HepG2 (cell line): ENCODE measurements at regions of chr20 and their contacts with region 1.

Region 1: DNA sequence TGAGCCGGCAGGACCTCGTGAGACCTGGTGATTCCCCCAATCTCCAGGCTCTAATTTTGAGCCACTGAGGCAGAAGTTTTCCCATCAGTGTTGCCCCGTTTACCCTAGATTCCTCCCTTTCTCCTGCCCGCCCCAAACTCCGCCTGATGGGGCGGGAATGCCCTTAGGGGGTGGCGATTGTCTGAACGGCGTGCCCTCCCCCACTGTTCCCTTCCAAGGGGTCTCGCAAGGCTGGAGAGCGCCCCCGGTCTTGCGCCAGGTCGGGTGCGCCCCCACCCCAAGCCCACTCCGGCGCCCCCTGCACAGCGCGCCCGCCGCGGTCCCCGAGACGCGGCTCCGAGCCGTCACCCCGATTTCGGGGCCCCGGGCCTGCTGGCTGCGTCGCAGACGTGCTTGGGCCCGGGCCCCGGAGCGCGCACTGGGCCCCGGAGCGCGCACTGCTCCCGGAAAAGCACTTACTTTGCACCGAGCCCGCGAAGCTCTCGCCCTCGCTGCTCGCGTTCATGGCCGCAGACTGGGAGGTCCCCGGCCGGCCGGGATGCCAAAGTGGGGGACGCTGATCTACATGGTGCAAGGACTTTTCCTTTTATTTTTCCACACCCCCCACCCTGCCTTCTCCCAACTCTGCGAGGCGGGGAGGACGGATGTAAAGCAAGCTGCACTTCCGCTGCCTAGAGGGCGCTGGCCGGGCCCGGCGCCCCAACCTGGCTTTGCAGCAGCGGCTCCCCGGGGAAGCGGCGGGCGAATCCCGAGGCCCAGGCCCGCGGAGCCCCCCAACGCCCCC is at the start of gene ZFP64:
- DNase-seq: peak; percentile 83
- ATAC-seq: peak; percentile 91
- H3K4me3 ChIP-seq: peak within 1 kb of the TSS; percentile 82 to 98 (median 91)
- H3K27ac ChIP-seq: peak within 1 kb of the TSS; percentile 81
- H3K4me1 ChIP-seq: peaks cover 18% of the 10 kb centered on the region
- H3K27me3 ChIP-seq: no peaks in the 10 kb centered on the region; a peak in 1 of 5 replicates
- CTCF ChIP-seq: peak; percentile 90
- EP300 ChIP-seq: peak; percentile 3 to 41; a peak in 3 of 4 replicates
- POLR2A ChIP-seq: peak; percentile 67 to 80; a peak in 3 of 4 replicates
- RAD21 ChIP-seq: 0 out of 2 replicates have a peak, but pooled peaks have one; percentile 56
- total RNA-seq, gene ZFP64: 12.0 and 13.3 TPM in 2 replicates

Region 2: GRCh38 chr20:52004715-52005114 is 186.6 kb before region 1 on chr20:
- CTCF ChIA-PET with region 1: no interaction called
- POLR2A ChIA-PET with region 1: no interaction called
- in situ Hi-C with region 1: no loop called
- intact Hi-C with region 1: no loop called
- DNase-seq: no peak
- ATAC-seq: no peak
- H3K4me3 ChIP-seq: no peak overlapping the region
- H3K27ac ChIP-seq: no peak overlapping the region
- H3K4me1 ChIP-seq: peaks cover 34% of the 10 kb centered on the region
- H3K27me3 ChIP-seq: no peaks in the 10 kb centered on the region
- CTCF ChIP-seq: no peak
- EP300 ChIP-seq: no peak
- POLR2A ChIP-seq: no peak
- RAD21 ChIP-seq: no peak

Region 3: GRCh38 chr20:52179331-52180179 is 11.8 kb before region 1 on chr20:
- CTCF ChIA-PET with region 1: no interaction called
- POLR2A ChIA-PET with region 1: interaction called, 10 read pairs
- in situ Hi-C with region 1: no loop called
- intact Hi-C with region 1: no loop called
- DNase-seq: no peak
- ATAC-seq: no peak
- H3K4me3 ChIP-seq: no peak overlapping the region
- H3K27ac ChIP-seq: no peak overlapping the region
- H3K4me1 ChIP-seq: peaks cover 5% of the 10 kb centered on the region
- H3K27me3 ChIP-seq: no peaks in the 10 kb centered on the region
- CTCF ChIP-seq: no peak
- EP300 ChIP-seq: no peak
- POLR2A ChIP-seq: no peak
- RAD21 ChIP-seq: no peak

Region 4: GRCh38 chr20:52230409-52230808 is 39.1 kb after region 1 on chr20:
- CTCF ChIA-PET with region 1: no interaction called
- POLR2A ChIA-PET with region 1: interaction called, 22 read pairs
- in situ Hi-C with region 1: no loop called
- intact Hi-C with region 1: loop called (anchors 1 kb)
- DNase-seq: no peak
- ATAC-seq: no peak
- H3K4me3 ChIP-seq: no peak overlapping the region
- H3K27ac ChIP-seq: peak overlapping the region; percentile 46
- H3K4me1 ChIP-seq: peaks cover 53% of the 10 kb centered on the region
- H3K27me3 ChIP-seq: no peaks in the 10 kb centered on the region
- CTCF ChIP-seq: no peak
- EP300 ChIP-seq: no peak
- POLR2A ChIP-seq: no peak
- RAD21 ChIP-seq: no peak

Region 5: DNA sequence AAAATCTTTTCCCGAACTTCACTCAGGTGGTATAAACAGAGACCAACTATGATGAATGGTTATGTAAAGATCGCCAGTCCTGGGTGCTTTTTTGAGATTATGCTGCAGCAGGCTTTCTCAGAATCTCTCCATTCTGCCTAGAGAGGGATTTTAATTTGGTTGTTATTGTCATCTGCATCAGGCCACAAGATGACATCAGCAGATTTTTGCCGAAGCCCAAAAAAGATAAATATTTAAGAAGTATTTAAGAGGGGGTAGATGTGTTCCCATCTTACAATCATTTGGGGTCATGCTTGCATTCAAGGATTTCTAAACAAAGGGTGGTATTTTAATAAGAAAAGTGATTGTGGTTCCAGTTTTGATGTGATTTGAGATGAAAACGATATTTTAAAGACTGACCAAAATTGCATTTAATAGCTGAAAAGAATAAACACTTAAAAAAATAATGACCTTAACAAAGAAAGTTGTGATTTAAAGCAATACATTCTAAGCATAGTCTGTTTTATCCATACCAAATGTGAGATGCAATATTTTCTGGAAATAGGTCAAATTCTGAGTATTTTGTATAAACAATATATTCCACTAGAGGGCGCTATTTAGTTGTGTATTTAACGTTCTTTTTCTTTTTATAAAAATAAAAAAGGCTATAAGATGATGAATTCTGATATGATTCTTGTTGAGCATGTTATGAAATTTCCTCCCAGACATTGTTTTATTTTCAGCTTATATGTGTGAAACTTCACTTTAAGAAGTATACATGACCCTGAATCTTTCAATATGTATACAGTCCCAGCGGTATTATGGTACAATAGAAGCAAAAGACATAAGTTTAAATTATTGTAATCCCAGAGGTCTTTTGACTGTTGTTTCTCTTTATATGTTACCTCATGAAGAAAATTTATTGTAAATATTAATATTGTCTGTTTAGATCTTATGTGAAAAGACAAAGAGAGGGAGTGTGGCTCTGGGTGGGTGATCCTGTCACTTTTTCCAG is 51.2 kb after region 1 on chr20:
- CTCF ChIA-PET with region 1: no interaction called
- POLR2A ChIA-PET with region 1: interaction called, 3 read pairs
- in situ Hi-C with region 1: no loop called
- intact Hi-C with region 1: loop called (anchors 2 kb)
- DNase-seq: no peak
- ATAC-seq: no peak
- H3K4me3 ChIP-seq: no peak overlapping the region
- H3K27ac ChIP-seq: no peak overlapping the region
- H3K4me1 ChIP-seq: peaks cover 4% of the 10 kb centered on the region; the same call in 1 of the 2 replicates
- H3K27me3 ChIP-seq: no peaks in the 10 kb centered on the region; a peak in 1 of 5 replicates
- CTCF ChIP-seq: peak; percentile 45
- EP300 ChIP-seq: no peak
- POLR2A ChIP-seq: no peak
- RAD21 ChIP-seq: no peak

Region 6: GRCh38 chr20:53032478-53032932 is 841.2 kb after region 1 on chr20:
- CTCF ChIA-PET with region 1: no interaction called
- POLR2A ChIA-PET with region 1: no interaction called
- in situ Hi-C with region 1: no loop called
- intact Hi-C with region 1: no loop called
- DNase-seq: no peak
- ATAC-seq: no peak
- H3K4me3 ChIP-seq: no peak overlapping the region
- H3K27ac ChIP-seq: no peak overlapping the region
- H3K4me1 ChIP-seq: no peaks in the 10 kb centered on the region
- H3K27me3 ChIP-seq: no peaks in the 10 kb centered on the region
- CTCF ChIP-seq: no peak
- EP300 ChIP-seq: no peak
- POLR2A ChIP-seq: no peak
- RAD21 ChIP-seq: no peak